ENCODE measurements at regions of chrX and their contacts with region 1.

Region 1: GRCh38 chrX:123822965-123823364 is 36.9 kb upstream of the XIAP start:
- DNase-seq: no peak
- ATAC-seq: no peak

Region 2: GRCh38 chrX:123854329-123854728 is 31.4 kb after region 1 on chrX:
- intact Hi-C with region 1: no loop called
- DNase-seq: no peak
- ATAC-seq: no peak

Region 3: GRCh38 chrX:124938715-124939114 is 1115.8 kb after region 1 on chrX:
- intact Hi-C with region 1: loop called (anchors 5 kb)
- DNase-seq: no peak
- ATAC-seq: no peak